Mammary epithelial cell (primary cell): ENCODE measurements at regions of chr2 and their contacts with region 1.

Region 1: GRCh38 chr2:124323321-124323720 is 298.2 kb downstream of the CNTNAP5 start:
- DNase-seq: no peak
- H3K4me3 ChIP-seq: no peak overlapping the region
- H3K27ac ChIP-seq: no peak overlapping the region
- H3K4me1 ChIP-seq: no peaks in the 10 kb centered on the region
- H3K27me3 ChIP-seq: no peaks in the 10 kb centered on the region
- CTCF ChIP-seq: no peak

Region 2: DNA sequence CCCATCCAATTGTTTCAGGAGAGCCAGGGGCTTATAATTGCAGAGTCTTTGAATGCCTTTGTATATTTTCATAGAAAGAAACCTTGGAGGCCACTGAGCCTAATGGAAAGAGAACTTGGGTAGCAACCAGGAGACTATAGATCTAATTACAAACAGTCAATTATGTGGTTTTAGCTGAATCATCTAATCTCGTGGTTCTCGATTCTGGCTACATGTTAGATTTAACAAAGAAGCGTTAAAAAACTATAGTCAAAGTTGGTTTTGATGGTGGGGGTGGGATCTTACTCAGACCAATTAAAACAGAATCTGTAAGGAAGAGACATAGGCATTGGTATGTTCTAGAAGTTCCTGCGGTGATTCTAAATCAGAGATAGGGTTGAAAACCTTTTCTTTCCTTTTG is 45.9 kb after region 1 on chr2:
- CTCF ChIA-PET with region 1: no interaction called
- dilution Hi-C with region 1: loop called (anchors 5 kb)
- in situ Hi-C with region 1: no loop called
- intact Hi-C with region 1: no loop called
- DNase-seq: no peak
- H3K4me3 ChIP-seq: no peak overlapping the region
- H3K27ac ChIP-seq: no peak overlapping the region
- H3K4me1 ChIP-seq: no peaks in the 10 kb centered on the region
- H3K27me3 ChIP-seq: no peaks in the 10 kb centered on the region
- CTCF ChIP-seq: no peak